PC-9 (cell line): ENCODE measurements at regions of chrX and their contacts with region 1.

Region 1: DNA sequence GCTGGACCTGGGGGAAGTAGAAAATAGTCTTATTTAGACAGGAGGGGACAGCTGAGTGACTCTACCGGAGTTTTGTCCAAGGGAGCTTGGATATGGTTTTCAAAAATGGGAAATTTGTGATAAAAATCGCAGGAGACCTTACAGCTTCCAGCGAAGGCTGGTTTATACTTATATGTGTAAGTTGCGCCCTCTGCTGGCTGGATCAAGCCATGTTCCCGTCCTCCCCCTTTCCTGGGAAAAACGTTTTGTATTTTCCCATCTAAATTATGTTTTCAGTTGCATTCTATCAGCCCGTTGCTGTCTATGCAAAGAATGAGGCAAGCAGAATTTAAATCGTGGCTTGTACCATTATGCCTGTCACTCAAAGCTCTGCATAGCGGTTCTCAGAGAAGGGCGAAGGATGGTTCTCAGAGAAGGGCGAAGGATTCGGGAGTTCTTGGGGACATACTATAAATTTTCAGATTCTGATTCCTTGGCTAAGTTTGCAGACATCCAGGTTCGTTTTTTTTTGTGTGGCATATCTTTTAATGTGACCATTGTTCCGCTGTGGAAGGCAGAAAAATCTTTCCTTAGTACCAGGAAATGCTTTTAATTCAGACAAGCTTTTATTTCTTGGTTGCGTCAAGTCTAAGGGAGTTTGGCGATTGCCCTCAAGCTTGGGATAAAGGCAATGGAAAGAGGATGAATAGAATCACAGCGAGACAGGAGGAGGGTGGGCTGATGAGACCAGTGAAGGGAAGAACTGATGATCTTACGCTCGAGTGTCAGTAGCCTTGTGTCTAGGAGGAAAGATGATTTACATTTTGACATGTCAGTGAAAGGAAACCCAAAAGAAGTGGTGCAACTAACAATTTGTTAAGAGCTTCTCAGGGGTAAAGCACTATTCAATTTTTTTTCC is 128.5 kb upstream of the ARX start:
- DNase-seq: peak in 1 of 2 experiments; percentile 32
- H3K4me3 ChIP-seq: no peak overlapping the region
- H3K27ac ChIP-seq: no peak overlapping the region
- H3K4me1 ChIP-seq: no peaks in the 10 kb centered on the region
- H3K27me3 ChIP-seq: 0 out of 2 replicates have a peak, but pooled peaks cover under 1% of the 10 kb centered on the region
- CTCF ChIP-seq: peak; percentile 78

Region 2: GRCh38 chrX:24395775-24396174 is 748.5 kb before region 1 on chrX:
- CTCF ChIA-PET with region 1: no interaction called
- POLR2A ChIA-PET with region 1: no interaction called
- intact Hi-C with region 1: loop called (anchors 5 kb)
- DNase-seq: peak in 1 of 2 experiments; percentile 38
- H3K4me3 ChIP-seq: no peak overlapping the region
- H3K27ac ChIP-seq: no peak overlapping the region
- H3K4me1 ChIP-seq: no peaks in the 10 kb centered on the region
- H3K27me3 ChIP-seq: peaks cover 8% of the 10 kb centered on the region; the same call in 1 of the 2 replicates
- CTCF ChIP-seq: peak; percentile 79

Region 3: GRCh38 chrX:24759786-24760185 is 384.5 kb before region 1 on chrX:
- CTCF ChIA-PET with region 1: no interaction called
- POLR2A ChIA-PET with region 1: no interaction called
- intact Hi-C with region 1: loop called (anchors 5 kb)
- DNase-seq: no peak
- H3K4me3 ChIP-seq: no peak overlapping the region
- H3K27ac ChIP-seq: no peak overlapping the region
- H3K4me1 ChIP-seq: no peaks in the 10 kb centered on the region
- H3K27me3 ChIP-seq: no peaks in the 10 kb centered on the region
- CTCF ChIP-seq: no peak

Region 4: DNA sequence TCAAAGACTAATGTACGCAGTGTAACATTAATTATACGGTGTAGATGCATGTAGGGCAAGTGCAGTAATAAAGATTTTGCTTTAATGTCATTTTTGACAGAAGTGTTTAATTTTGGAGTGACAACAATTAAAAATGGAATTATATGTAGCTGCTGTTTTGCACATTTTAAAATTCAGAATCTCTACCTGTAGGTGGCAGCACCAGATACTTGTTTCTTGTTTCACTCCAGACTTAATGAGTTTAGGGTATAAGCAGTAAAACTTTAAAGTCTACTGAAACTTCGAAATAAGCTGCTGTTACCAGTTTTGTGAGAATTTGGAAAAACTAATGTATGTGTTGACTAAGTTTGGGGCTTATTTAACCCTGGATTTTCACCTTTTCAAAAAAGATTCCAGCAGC is 305.7 kb before region 1 on chrX:
- CTCF ChIA-PET with region 1: interaction called, 11 read pairs
- POLR2A ChIA-PET with region 1: no interaction called
- intact Hi-C with region 1: loop called (anchors 1 kb)
- DNase-seq: peak in 1 of 2 experiments; percentile 2
- H3K4me3 ChIP-seq: no peak overlapping the region
- H3K27ac ChIP-seq: no peak overlapping the region
- H3K4me1 ChIP-seq: no peaks in the 10 kb centered on the region
- H3K27me3 ChIP-seq: no peaks in the 10 kb centered on the region
- CTCF ChIP-seq: peak; percentile 69

Region 5: GRCh38 chrX:25241461-25241860 is 97.2 kb after region 1 on chrX:
- CTCF ChIA-PET with region 1: no interaction called
- POLR2A ChIA-PET with region 1: no interaction called
- intact Hi-C with region 1: no loop called
- DNase-seq: no peak
- H3K4me3 ChIP-seq: no peak overlapping the region
- H3K27ac ChIP-seq: no peak overlapping the region
- H3K4me1 ChIP-seq: no peaks in the 10 kb centered on the region
- H3K27me3 ChIP-seq: no peaks in the 10 kb centered on the region
- CTCF ChIP-seq: no peak

Region 6: GRCh38 chrX:25275159-25275558 is 130.9 kb after region 1 on chrX:
- CTCF ChIA-PET with region 1: no interaction called
- POLR2A ChIA-PET with region 1: no interaction called
- intact Hi-C with region 1: no loop called
- DNase-seq: no peak
- H3K4me3 ChIP-seq: no peak overlapping the region
- H3K27ac ChIP-seq: no peak overlapping the region
- H3K4me1 ChIP-seq: no peaks in the 10 kb centered on the region
- H3K27me3 ChIP-seq: no peaks in the 10 kb centered on the region; the same call in 1 of the 2 replicates
- CTCF ChIP-seq: no peak